ENCODE measurements at regions of chr22 and their contacts with region 1.

Region 1: GRCh38 chr22:38317122-38317994 is at the start of gene CSNK1E:
- DNase-seq: peak; percentile 37 to 88 (median 70)
- ATAC-seq: peak; percentile 55
- H3K4me3 ChIP-seq: peak within 1 kb of the TSS; percentile 67
- H3K4me3 Mint-ChIP-seq: peak within 1 kb of the TSS; percentile 95
- H3K27ac ChIP-seq: peak within 1 kb of the TSS; percentile 78 to 84
- H3K27ac Mint-ChIP-seq: peak within 1 kb of the TSS; percentile 99
- H3K4me1 ChIP-seq: peaks cover 54% of the 10 kb centered on the region
- H3K4me1 Mint-ChIP-seq: peaks cover 50% of the 10 kb centered on the region
- H3K27me3 ChIP-seq: no peaks in the 10 kb centered on the region
- H3K27me3 Mint-ChIP-seq: no peaks in the 10 kb centered on the region
- CTCF ChIP-seq: no peak
- total RNA-seq, gene CSNK1E: 208 to 217 TPM

Region 2: DNA sequence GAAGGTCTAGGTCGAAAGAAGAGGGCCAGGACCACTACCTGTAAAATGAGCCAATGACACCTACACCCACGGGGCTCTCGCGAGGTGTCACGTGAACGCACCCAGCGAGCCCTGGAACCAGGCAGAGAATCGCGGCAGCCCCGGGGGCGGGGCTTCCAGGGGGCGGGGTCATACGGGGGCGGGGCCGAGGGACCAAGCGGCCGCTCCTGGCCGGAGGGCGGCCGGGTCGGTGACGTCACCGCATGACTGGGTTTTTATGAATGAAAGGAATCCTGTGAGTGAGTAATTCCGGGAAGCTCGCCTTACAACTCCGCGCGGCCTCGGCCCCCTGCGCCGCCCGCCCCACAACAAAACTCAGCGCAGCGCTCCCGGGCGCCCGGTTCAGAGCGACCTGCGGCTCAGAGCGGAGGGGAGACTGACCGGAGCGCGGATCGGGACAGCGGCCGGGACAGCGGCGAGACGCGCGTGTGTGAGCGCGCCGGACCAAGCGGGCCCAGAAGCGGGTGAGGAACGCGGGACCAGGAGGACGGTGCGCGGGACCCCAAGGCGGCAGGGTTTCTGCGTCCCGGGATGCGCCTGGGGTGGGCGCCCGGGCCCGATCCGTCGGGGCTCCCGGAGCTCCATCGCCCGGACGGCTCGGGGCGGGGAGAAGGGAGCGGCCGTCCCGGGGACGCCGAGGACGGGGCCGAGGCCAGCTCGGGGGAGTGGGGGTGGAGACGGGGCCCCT is 115.5 kb before region 1 on chr22 and contains the start of gene MAFF:
- CTCF ChIA-PET with region 1: no interaction called
- POLR2A ChIA-PET with region 1: interaction called, 7 read pairs
- intact Hi-C with region 1: loop called in 1 of 2 experiments (anchors 5 kb)
- DNase-seq: peak; percentile 65 to 96 (median 80)
- ATAC-seq: peak; percentile 74
- H3K4me3 ChIP-seq: peak within 1 kb of the TSS; percentile 83
- H3K4me3 Mint-ChIP-seq: peak within 1 kb of the TSS; percentile 90
- H3K27ac ChIP-seq: peak within 1 kb of the TSS; percentile 82
- H3K27ac Mint-ChIP-seq: peak within 1 kb of the TSS; percentile 87
- H3K4me1 ChIP-seq: peaks cover 37% of the 10 kb centered on the region
- H3K4me1 Mint-ChIP-seq: peaks cover 26% of the 10 kb centered on the region
- H3K27me3 ChIP-seq: no peaks in the 10 kb centered on the region
- H3K27me3 Mint-ChIP-seq: no peaks in the 10 kb centered on the region
- CTCF ChIP-seq: no peak
- total RNA-seq, gene MAFF: 25.6 to 27.3 TPM

Region 3: DNA sequence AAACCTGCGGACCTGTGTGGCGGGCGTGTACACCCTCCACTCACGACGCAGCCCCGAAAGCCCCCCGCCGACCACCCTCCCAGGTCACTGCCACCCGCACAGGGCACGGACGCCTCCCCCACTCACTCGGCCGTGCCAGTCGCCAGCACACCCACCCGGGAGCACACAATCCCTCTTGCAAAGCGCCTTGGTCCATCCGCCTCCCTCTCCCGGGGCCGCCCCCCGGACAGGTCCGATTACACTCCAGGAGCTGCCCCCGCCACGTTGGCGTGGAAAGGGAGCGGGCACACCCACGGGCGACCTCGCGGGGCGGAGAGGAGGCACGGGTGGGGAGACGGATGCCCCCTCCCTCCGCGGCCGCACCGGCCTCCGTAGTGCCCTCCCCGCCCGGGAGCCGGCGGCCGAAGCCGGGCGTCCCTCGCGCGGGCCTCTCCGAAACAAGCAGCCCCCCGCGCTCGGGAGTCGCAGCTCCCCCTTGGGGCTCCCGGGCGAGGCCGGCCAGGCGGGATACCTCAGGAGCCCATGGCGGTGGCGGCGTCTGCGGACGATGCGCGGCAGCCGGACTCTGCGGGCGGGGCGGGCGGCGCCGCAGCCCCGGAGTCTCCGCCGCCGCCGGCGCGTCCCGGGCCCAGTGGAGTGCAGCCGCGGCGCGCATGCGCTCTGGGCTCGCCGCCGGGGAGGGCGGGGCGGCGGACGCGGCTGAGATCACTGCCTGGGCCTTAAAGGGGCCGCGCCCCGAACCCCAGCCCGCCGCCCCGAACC is 44.8 kb before region 1 on chr22 and contains the start of gene TMEM184B:
- CTCF ChIA-PET with region 1: no interaction called
- POLR2A ChIA-PET with region 1: interaction called, 3 read pairs
- intact Hi-C with region 1: loop called (anchors 1 to 2 kb)
- DNase-seq: peak; percentile 65 to 95 (median 80)
- ATAC-seq: peak; percentile 93
- H3K4me3 ChIP-seq: peak within 1 kb of the TSS; percentile 89
- H3K4me3 Mint-ChIP-seq: peak within 1 kb of the TSS; percentile 95
- H3K27ac ChIP-seq: peak within 1 kb of the TSS; percentile 77 to 90
- H3K27ac Mint-ChIP-seq: peak within 1 kb of the TSS; percentile 95
- H3K4me1 ChIP-seq: peaks cover 50% of the 10 kb centered on the region
- H3K4me1 Mint-ChIP-seq: peaks cover 55% of the 10 kb centered on the region
- H3K27me3 ChIP-seq: no peaks in the 10 kb centered on the region
- H3K27me3 Mint-ChIP-seq: no peaks in the 10 kb centered on the region
- CTCF ChIP-seq: no peak
- total RNA-seq, gene TMEM184B: 49.3 to 50.1 TPM

Region 4: GRCh38 chr22:38398609-38399461 is 81.5 kb after region 1 on chr22:
- CTCF ChIA-PET with region 1: no interaction called
- POLR2A ChIA-PET with region 1: interaction called, 3 read pairs
- intact Hi-C with region 1: loop called in 1 of 2 experiments (anchors 5 kb)
- DNase-seq: peak; percentile 72 to 91 (median 86)
- ATAC-seq: peak; percentile 73
- H3K4me3 ChIP-seq: peak overlapping the region; percentile 68
- H3K4me3 Mint-ChIP-seq: peak overlapping the region; percentile 86
- H3K27ac ChIP-seq: no peak overlapping the region
- H3K27ac Mint-ChIP-seq: peak overlapping the region; percentile 75
- H3K4me1 ChIP-seq: peaks cover 15% of the 10 kb centered on the region
- H3K4me1 Mint-ChIP-seq: peaks cover 35% of the 10 kb centered on the region
- H3K27me3 ChIP-seq: no peaks in the 10 kb centered on the region
- H3K27me3 Mint-ChIP-seq: no peaks in the 10 kb centered on the region
- CTCF ChIP-seq: no peak

Region 5: GRCh38 chr22:38569972-38570778 is 252.8 kb after region 1 on chr22 and contains the start of gene DMC1:
- CTCF ChIA-PET with region 1: no interaction called
- POLR2A ChIA-PET with region 1: no interaction called
- intact Hi-C with region 1: loop called in 1 of 2 experiments (anchors 5 kb)
- DNase-seq: peak; percentile 93 to 100 (median 97)
- ATAC-seq: peak; percentile 92
- H3K4me3 ChIP-seq: peak within 1 kb of the TSS; percentile 89
- H3K4me3 Mint-ChIP-seq: peak within 1 kb of the TSS; percentile 90
- H3K27ac ChIP-seq: peak within 1 kb of the TSS in 1 of 2 donors; percentile 44
- H3K27ac Mint-ChIP-seq: peak within 1 kb of the TSS; percentile 80
- H3K4me1 ChIP-seq: peaks cover 20% of the 10 kb centered on the region
- H3K4me1 Mint-ChIP-seq: peaks cover 17% of the 10 kb centered on the region
- H3K27me3 ChIP-seq: no peaks in the 10 kb centered on the region
- H3K27me3 Mint-ChIP-seq: no peaks in the 10 kb centered on the region
- CTCF ChIP-seq: no peak
- total RNA-seq, gene DMC1: 0.52 to 0.95 TPM

Region 6: DNA sequence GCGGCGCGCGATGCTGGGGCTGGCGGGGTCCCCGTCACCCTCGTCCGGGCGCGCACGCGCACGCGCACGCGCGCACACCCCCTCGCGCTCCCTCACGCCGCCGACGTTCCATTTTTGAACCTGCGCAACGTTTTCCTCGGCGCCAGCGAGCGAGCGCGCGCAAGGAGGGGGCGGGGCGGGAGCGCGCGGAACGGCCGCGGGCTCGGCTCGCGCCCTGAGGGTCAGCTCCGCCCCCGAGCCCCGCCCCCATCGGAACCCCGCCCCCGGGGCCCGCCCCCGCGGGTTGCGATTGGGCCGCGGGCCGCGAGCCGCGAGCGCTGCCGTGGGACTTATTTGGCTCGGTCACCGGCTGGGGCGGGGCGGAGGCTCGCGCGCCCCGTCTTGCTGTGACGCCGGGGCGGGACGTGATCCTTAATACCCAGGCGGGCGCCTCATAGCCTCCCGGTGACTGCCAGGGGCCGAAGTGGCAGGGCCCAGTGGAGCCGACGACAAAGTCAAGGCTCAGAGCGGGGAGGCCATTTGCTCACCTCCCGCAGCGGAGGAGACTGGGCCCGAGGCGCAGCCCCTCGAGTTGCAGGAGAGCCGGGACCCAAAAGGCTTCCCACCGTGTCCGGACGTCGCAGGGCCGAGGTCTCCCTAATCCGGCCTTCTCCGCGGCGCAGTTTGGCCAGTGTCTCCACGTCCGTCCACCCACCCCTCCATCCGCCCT is 835.3 kb after region 1 on chr22 and contains the start of gene CBX7:
- CTCF ChIA-PET with region 1: no interaction called
- POLR2A ChIA-PET with region 1: no interaction called
- intact Hi-C with region 1: loop called in 1 of 2 experiments (anchors 5 kb)
- DNase-seq: peak; percentile 84 to 98 (median 94)
- ATAC-seq: peak; percentile 83
- H3K4me3 ChIP-seq: peak within 1 kb of the TSS; percentile 94
- H3K4me3 Mint-ChIP-seq: peak within 1 kb of the TSS; percentile 94
- H3K27ac ChIP-seq: peak within 1 kb of the TSS; percentile 83 to 86
- H3K27ac Mint-ChIP-seq: peak within 1 kb of the TSS; percentile 100
- H3K4me1 ChIP-seq: peaks cover 54% of the 10 kb centered on the region
- H3K4me1 Mint-ChIP-seq: peaks cover 39% of the 10 kb centered on the region
- H3K27me3 ChIP-seq: no peaks in the 10 kb centered on the region
- H3K27me3 Mint-ChIP-seq: no peaks in the 10 kb centered on the region
- CTCF ChIP-seq: no peak
- total RNA-seq, gene CBX7: 48.6 to 49.1 TPM

Measured in CD4-positive, alpha-beta T cell (primary cell).